Dorsolateral prefrontal cortex (tissue), 120 donors: ENCODE measurements at regions of chr2 and their contacts with region 1.

Region 1: DNA sequence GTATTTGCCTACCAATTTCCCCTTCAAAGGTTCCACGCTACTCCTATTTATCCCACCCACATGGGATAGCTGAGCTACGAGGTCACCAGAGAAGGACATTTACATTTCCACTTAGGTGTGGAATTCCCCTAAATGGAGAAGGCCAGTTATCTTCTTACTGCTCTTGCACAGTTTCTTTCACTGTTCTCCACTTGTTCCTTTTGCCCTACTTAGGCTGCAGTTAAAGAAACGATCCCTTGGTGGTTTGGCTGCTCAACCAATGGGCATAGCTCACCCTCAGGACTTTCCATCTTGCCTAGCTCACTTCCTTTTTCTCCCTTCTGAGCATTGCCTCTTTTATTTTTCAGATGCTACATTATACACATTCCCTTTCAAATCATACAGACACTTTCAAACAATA is 11.2 kb upstream of the NABP1 start:
- DNase-seq: no peak
- H3K4me3 ChIP-seq: no peak overlapping the region
- H3K27ac ChIP-seq: no peak overlapping the region
- H3K27me3 ChIP-seq: peaks cover 0 to 3% (median 0%) of the 10 kb centered on the region in 45 donors
- CTCF ChIP-seq: no peak

Region 2: DNA sequence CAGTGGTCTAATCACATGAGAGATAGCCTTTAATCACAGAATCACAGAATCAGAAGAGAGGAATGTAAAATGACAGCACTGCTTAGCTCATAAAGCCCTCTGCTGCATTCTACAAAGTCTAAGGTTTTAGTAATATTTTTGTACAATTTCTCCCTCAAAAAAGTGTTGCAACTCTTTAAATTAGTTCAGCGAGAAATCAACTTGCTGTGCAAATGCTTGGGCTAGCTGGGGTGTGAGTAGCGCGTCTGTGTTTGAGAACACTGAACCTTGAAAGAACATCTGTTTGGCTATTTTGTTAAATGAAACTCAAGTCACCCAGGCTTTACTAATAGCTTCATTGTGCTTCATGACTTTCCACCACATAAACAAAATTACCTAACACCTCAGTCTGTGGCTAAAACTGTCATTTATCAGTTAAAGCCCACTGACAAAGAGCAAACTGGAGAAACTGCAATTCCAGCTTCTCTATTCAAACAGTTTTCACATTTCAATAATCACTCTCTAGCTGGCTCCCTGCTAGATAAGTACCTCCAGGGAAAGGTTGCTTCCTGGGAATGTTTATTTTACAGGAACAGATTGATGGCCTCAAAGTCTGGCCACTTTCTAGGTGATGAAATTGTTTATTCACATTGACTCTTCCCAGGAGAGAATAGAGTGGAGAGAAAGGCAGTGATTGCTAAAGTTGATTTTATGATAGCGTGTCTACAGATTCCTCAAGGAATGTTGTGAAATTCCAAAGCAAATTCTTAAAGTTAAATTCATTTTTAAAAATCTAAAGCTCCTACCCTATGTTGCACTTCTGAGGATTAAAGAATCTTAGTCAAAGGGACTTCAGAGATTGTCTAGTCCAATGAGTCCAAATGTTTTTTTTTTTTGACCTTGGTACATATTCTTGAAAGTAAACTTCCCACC is 616.7 kb before region 1 on chr2:
- intact Hi-C with region 1: no loop called
- DNase-seq: no peak
- H3K4me3 ChIP-seq: no peak overlapping the region
- H3K27ac ChIP-seq: no peak overlapping the region
- H3K27me3 ChIP-seq: peaks cover 0 to 4% (median 0%) of the 10 kb centered on the region in 45 donors
- CTCF ChIP-seq: no peak

Region 3: GRCh38 chr2:191617575-191617974 is 49.2 kb before region 1 on chr2:
- intact Hi-C with region 1: loop called in 1 of 2 experiments (anchors 10 kb)
- DNase-seq: no peak
- H3K4me3 ChIP-seq: no peak overlapping the region
- H3K27ac ChIP-seq: no peak overlapping the region
- H3K27me3 ChIP-seq: no peaks in the 10 kb centered on the region
- CTCF ChIP-seq: no peak